CD8-positive, alpha-beta T cell (primary cell): ENCODE measurements at regions of chr3 and their contacts with region 1.

Region 1: DNA sequence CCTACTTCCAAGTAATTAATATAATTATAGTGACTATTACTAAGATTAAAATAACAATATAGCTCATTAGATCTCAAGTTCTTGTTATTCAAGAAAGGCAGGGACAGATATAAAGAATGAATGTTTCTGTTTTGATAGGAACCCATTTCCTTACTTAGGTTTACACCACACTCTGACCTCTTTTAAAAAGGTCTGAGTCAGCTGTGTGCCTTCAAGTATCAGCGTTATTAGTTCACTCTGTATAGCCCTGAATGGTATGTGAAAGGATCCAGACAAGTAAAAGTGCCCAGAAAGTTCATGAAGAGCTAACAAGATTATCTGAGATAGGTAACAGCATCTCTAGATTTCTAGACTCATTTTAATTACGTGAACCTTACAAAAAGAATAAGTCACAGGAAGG is 28.9 kb downstream of the PDCD10 start:
- DNase-seq: no peak
- ATAC-seq: no peak
- H3K4me3 ChIP-seq: no peak overlapping the region
- H3K4me3 Mint-ChIP-seq: no peak overlapping the region
- H3K27ac ChIP-seq: no peak overlapping the region
- H3K27ac Mint-ChIP-seq: peak overlapping the region; percentile 25
- H3K4me1 ChIP-seq: no peaks in the 10 kb centered on the region
- H3K4me1 Mint-ChIP-seq: peaks cover 30% of the 10 kb centered on the region
- H3K27me3 ChIP-seq: no peaks in the 10 kb centered on the region
- H3K27me3 Mint-ChIP-seq: no peaks in the 10 kb centered on the region
- CTCF ChIP-seq: no peak

Region 2: DNA sequence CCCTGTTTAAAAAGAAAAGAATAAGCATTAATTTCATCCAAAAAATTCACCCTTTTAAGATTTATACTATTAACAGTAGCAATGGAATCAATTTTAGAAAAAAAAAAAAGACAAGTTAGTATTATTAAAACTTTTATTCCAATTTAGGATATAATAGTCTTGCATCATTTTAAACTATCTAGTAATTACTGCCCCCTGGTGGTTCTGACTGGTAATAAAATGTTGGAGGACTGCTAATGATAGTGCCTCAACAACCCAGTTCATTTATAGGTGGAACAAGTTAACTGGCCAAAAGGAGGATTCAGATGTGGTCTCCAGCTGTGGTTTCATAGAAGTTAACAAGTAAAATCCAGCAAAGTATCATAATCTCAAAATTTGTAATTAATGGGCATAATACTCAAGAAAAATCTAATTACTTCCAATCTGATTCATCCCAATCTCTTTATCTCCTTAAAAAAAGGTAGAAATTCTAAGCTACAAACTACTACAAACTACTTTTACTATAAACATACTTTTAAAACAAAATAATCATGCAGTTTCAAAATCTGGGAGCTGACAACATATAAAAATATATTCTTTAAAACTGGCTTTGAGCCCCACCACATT is 21.3 kb before region 1 on chr3:
- CTCF ChIA-PET with region 1: interaction called, 4 read pairs
- POLR2A ChIA-PET with region 1: no interaction called
- intact Hi-C with region 1: loop called in 1 of 2 experiments (anchors 2 kb)
- DNase-seq: peak in 7 of 9 experiments; percentile 6 to 73 (median 31)
- ATAC-seq: peak; percentile 82
- H3K4me3 ChIP-seq: no peak overlapping the region
- H3K4me3 Mint-ChIP-seq: no peak overlapping the region
- H3K27ac ChIP-seq: no peak overlapping the region
- H3K27ac Mint-ChIP-seq: no peak overlapping the region
- H3K4me1 ChIP-seq: no peaks in the 10 kb centered on the region
- H3K4me1 Mint-ChIP-seq: peaks cover 2% of the 10 kb centered on the region
- H3K27me3 ChIP-seq: no peaks in the 10 kb centered on the region
- H3K27me3 Mint-ChIP-seq: no peaks in the 10 kb centered on the region
- CTCF ChIP-seq: peak; percentile 93

Region 3: GRCh38 chr3:168548719-168549118 is 842.9 kb after region 1 on chr3:
- CTCF ChIA-PET with region 1: no interaction called
- POLR2A ChIA-PET with region 1: no interaction called
- intact Hi-C with region 1: no loop called
- DNase-seq: no peak
- ATAC-seq: no peak
- H3K4me3 ChIP-seq: no peak overlapping the region
- H3K4me3 Mint-ChIP-seq: no peak overlapping the region
- H3K27ac ChIP-seq: no peak overlapping the region
- H3K27ac Mint-ChIP-seq: no peak overlapping the region
- H3K4me1 ChIP-seq: no peaks in the 10 kb centered on the region
- H3K4me1 Mint-ChIP-seq: no peaks in the 10 kb centered on the region
- H3K27me3 ChIP-seq: no peaks in the 10 kb centered on the region
- H3K27me3 Mint-ChIP-seq: no peaks in the 10 kb centered on the region
- CTCF ChIP-seq: no peak